AG04450 (cell line): ENCODE measurements at regions of chr5 and their contacts with region 1.

Region 1: DNA sequence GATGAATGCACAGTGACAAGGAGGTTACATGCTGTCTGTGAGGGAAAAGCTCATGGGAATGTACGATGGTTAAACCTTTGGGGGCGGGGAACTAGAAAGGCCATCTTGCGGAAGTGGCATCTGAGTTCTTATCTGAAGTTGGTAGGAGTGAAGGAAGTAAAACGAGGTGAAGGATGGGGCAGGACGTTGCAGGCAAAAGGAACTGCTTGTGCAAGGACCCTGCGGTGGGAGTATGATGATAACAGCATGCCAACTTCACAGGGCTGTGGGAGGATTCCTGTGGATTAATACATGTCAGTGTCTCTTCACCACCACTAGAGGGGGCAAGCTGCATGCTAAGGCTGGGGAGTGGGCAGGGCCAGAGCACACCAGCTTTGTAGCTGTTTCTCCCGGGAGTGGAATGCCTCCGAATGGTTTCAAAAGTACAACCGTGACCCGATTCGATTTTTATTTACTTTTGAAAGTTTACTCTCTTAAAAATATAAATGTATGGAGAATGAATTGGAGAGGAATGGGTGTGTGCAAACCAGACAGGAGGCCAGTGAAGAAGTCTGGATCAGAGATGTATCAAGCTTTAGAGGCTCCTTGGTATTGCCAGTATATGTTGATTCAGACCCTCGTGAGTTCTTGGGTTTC is 62.5 kb downstream of the CYFIP2 start:
- DNase-seq: peak; percentile 70
- H3K4me3 ChIP-seq: peak overlapping the region; percentile 33
- H3K27ac ChIP-seq: no peak overlapping the region
- H3K27me3 ChIP-seq: no peaks in the 10 kb centered on the region
- CTCF ChIP-seq: peak; percentile 99

Region 2: GRCh38 chr5:157150995-157151394 is 177.4 kb before region 1 on chr5:
- CTCF ChIA-PET with region 1: no interaction called
- POLR2A ChIA-PET with region 1: no interaction called
- DNase-seq: no peak
- H3K4me3 ChIP-seq: no peak overlapping the region
- H3K27ac ChIP-seq: no peak overlapping the region
- H3K27me3 ChIP-seq: no peaks in the 10 kb centered on the region
- CTCF ChIP-seq: no peak

Region 3: DNA sequence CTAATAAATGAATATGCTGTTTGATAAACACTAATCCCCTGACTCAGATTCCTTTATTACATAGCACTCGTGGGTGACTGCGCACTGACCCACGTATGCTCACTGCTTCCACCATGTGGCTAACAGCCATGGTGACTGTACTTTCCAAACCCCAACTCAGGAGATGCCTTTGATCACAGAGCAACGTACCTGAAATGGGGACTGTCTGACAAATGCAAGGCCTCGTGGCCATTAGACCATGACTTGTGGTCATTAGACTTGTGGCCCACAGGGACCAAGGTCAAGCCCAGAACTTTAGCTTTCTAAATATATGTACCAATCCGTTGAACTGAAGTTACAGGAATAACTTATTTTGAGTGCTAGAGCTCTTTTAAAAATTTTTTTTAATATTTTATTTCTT is 15.9 kb before region 1 on chr5:
- CTCF ChIA-PET with region 1: interaction called, 22 read pairs
- POLR2A ChIA-PET with region 1: no interaction called
- DNase-seq: no peak
- H3K4me3 ChIP-seq: no peak overlapping the region
- H3K27ac ChIP-seq: no peak overlapping the region
- H3K27me3 ChIP-seq: peaks cover 12% of the 10 kb centered on the region
- CTCF ChIP-seq: peak; percentile 88

Region 4: GRCh38 chr5:157342822-157343402 is 14.5 kb after region 1 on chr5:
- CTCF ChIA-PET with region 1: interaction called, 13 read pairs
- POLR2A ChIA-PET with region 1: no interaction called
- DNase-seq: no peak
- H3K4me3 ChIP-seq: no peak overlapping the region
- H3K27ac ChIP-seq: no peak overlapping the region
- H3K27me3 ChIP-seq: no peaks in the 10 kb centered on the region
- CTCF ChIP-seq: peak; percentile 48

Region 5: GRCh38 chr5:157366741-157367674 is 38.6 kb after region 1 on chr5:
- CTCF ChIA-PET with region 1: interaction called, 13 read pairs
- POLR2A ChIA-PET with region 1: interaction called, 5 read pairs
- DNase-seq: peak; percentile 54
- H3K4me3 ChIP-seq: no peak overlapping the region
- H3K27ac ChIP-seq: no peak overlapping the region
- H3K27me3 ChIP-seq: no peaks in the 10 kb centered on the region
- CTCF ChIP-seq: peak; percentile 82

Region 6: DNA sequence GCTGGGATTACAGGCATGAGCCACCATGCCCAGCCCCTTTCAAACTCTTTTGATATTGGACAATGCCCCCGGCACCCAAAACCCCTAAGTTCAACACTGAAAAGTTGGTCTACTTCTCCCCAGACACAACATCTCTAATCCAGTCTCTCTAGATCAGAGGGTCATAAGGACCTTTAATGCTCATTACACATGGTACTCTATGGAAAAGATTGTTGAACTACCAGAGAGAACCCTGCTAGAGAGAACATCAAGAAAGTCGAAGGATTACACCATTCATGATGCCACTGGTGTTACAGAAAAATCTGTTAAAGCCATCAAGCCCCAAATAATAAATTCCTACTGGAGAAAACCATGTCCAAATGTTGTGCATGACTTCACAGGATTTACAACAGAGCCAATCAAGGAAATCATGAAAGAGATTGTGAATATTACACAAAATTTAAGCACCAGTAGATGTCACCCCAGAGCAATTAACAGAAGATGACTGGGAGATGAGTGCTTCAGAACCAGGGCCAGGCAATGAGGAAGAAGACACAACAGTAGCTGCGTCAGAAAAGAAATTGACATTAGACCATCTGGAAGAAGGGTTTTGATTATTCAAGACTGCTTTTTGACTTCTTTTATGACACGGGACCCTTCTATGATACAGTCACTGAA is 103.3 kb after region 1 on chr5:
- CTCF ChIA-PET with region 1: interaction called, 10 read pairs
- POLR2A ChIA-PET with region 1: no interaction called
- DNase-seq: peak; percentile 24
- H3K4me3 ChIP-seq: no peak overlapping the region
- H3K27ac ChIP-seq: no peak overlapping the region
- H3K27me3 ChIP-seq: no peaks in the 10 kb centered on the region
- CTCF ChIP-seq: peak; percentile 57

Region 7: DNA sequence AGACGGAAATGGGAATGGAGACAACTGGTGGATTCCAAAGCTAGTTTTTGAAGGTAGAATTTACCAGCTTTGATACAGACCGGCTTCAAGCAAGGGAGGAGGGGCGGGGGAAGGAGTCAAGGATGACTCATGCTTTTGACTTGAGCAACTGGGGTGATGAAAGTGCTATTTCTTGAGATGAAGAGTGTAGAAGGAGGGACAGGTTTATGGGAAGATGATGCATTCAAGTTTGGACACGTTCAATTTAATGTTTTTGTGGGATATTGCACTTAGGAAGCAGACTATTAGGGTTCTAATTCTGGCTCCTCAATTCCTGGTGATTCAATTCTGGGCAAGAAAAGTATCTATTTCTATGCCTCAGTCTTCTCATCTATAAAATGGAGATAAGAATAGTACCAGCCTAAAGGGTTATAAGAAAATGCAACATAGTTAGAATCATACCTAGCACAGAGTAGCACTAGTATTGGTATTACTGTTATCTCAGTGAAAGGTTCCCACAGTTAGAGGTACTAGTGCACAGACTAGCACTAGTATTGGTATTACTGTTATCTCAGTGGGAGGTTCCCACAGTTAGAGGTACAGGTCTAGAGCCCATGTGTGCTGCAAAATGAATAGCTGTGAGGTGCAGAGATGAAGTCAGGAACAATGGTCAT is 136.2 kb after region 1 on chr5:
- CTCF ChIA-PET with region 1: interaction called, 53 read pairs
- POLR2A ChIA-PET with region 1: no interaction called
- DNase-seq: peak; percentile 61
- H3K4me3 ChIP-seq: no peak overlapping the region
- H3K27ac ChIP-seq: no peak overlapping the region
- H3K27me3 ChIP-seq: no peaks in the 10 kb centered on the region
- CTCF ChIP-seq: no peak

Region 8: GRCh38 chr5:157718519-157718918 is 390.1 kb after region 1 on chr5:
- CTCF ChIA-PET with region 1: interaction called, 55 read pairs
- POLR2A ChIA-PET with region 1: interaction called, 4 read pairs
- DNase-seq: no peak
- H3K4me3 ChIP-seq: no peak overlapping the region
- H3K27ac ChIP-seq: no peak overlapping the region
- H3K27me3 ChIP-seq: no peaks in the 10 kb centered on the region
- CTCF ChIP-seq: peak; percentile 69